Naive thymus-derived CD8-positive, alpha-beta T cell (primary cell): ENCODE measurements at regions of chr11 and their contacts with region 1.

Region 1: GRCh38 chr11:75328426-75329277 is 22.8 kb downstream of the ARRB1 start:
- DNase-seq: peak; percentile 19 to 86 (median 58)
- ATAC-seq: peak; percentile 92 to 94
- H3K4me3 Mint-ChIP-seq: peak overlapping the region; percentile 36 to 79 (median 66)
- H3K27ac Mint-ChIP-seq: peak overlapping the region; percentile 31 to 96 (median 90)
- H3K4me1 Mint-ChIP-seq: peaks cover 51 to 86% (median 80%) of the 10 kb centered on the region in 4 donors
- H3K27me3 Mint-ChIP-seq: no peaks in the 10 kb centered on the region

Region 2: DNA sequence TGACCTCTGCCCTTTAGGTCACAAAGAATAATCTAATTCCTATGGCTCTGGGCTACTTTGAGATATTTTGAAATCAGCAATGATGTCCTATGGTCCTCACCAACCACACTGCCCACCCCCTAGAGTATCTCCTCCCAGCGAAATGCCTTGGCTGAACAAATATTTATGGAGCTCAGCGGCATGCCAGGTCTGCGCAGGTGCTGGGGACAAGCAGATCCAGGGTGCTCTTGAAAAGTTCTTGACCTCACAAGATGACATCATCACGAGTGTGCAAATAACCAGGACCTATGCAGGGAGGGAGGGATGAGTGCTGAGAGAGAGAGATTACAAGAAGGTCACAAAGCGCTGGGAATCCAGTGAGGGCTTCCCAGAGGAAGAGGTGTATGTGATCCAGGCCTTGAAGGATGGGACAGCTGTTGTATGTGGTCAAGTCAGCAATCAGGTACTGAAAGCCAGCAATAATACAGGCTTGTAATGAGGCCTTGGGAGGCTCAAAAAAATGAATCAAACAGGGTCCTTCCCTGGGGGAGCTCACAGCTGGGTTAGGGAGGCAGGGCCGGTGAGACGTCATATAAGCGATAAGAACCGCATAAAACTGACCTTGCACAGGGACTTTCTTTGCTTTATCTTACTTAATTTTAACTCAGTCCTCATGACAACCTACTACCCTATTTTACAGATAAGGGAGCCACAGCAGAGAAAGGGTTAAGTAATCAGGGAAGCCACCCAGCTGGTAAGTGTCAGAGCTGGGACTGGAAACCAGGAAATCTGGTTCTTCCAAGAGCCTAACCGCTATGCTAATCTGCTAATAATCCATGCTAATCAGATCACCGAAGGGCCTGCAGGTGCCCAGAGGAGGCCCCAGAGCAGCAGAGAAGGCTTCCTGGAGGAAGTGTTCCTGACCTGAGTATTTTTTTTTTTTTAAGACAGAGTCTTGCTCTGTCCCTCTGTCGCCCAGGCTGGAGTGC is 14.5 kb after region 1 on chr11:
- POLR2A ChIA-PET with region 1: interaction called, 57 read pairs
- DNase-seq: no peak
- ATAC-seq: no peak
- H3K4me3 Mint-ChIP-seq: peak overlapping the region in 9 of 10 donors; percentile 1 to 93 (median 57)
- H3K27ac Mint-ChIP-seq: peak overlapping the region; percentile 66 to 98 (median 84)
- H3K4me1 Mint-ChIP-seq: peaks cover 72 to 100% (median 99%) of the 10 kb centered on the region in 4 donors
- H3K27me3 Mint-ChIP-seq: no peaks in the 10 kb centered on the region